HEK293 (cell line): ENCODE measurements at regions of chr17 and their contacts with region 1.

Region 1: DNA sequence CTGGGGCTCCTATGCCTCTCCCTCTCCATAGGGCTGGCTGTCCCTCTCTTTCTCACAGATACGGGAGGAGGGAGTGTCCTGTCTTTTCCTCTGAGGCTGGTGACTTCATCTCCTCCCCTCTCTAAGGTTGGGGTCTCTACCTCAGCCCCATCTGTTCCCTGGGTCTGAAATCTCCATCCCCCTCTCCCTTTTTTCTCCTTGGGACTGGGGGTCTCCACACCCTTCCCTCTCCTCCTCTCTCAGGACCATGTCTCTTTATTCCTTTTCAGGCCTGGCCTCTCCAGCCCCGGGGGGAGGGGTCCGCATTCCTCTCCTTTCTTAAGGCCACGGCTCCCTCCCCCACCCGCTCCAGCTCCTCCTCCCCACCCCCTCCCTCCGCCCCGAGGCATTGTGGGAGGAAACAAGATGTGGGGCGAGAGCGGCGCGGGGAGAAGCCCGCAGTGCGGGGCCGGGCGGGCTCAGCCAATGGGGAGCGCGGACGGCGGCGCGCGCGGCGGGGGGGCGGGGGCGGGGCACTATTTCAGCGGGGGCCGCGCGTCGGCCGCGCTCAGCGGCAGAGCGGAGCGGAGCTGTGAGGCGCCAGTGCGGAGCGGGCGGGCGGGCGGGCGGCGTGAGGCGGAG is at the start of gene DYNLL2:
- H3K4me3 ChIP-seq: peak within 1 kb of the TSS; percentile 91
- H3K27ac ChIP-seq: peak within 1 kb of the TSS; percentile 90
- H3K4me1 ChIP-seq: peaks cover 19% of the 10 kb centered on the region
- CTCF ChIP-seq: no peak

Region 2: DNA sequence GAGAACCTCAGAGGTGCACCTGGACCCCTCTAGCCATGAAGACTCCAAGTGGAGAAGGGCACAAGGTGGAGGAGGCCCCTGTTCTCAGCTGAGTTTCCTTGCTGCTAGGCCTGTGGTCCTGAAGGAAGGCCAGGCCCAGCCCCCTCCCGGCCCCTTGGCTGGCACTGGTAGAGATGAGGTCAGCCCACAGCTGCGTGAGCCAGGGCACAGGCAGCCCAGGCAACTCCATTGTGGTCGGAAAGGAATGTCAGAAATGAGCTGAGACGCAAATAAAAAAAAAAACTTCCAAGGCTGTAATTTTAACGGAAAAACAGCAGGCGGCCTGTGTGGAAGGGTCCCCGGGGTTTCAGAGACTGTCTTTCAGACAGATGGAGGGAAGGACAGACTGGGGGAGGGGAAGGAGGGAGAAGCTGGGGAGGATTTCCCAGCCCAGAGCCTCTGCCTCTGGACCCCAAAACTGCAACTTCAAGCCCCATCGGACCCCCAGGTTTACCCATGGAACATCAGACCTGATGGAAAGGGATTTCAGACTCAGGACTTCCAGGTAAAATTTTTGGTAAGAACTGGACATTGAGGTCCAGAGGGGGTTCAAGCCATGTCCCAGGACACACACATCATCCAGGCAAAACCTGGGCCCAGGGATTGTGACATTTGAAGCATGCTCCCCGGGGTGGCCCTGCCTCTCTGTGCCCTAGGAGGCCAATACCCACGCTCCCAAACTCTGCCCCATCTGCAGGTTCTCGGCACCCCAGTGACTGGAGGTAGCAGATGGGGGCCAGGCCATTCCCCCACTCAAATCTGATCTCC is 207.5 kb before region 1 on chr17:
- CTCF ChIA-PET with region 1: interaction called, 3 read pairs
- POLR2A ChIA-PET with region 1: interaction called, 13 read pairs
- H3K4me3 ChIP-seq: no peak overlapping the region
- H3K27ac ChIP-seq: peak overlapping the region; percentile 87
- H3K4me1 ChIP-seq: peaks cover 21% of the 10 kb centered on the region
- CTCF ChIP-seq: peak; percentile 65

Region 3: GRCh38 chr17:58072862-58073261 is 10.1 kb before region 1 on chr17:
- CTCF ChIA-PET with region 1: no interaction called
- POLR2A ChIA-PET with region 1: interaction called, 13 read pairs
- H3K4me3 ChIP-seq: no peak overlapping the region
- H3K27ac ChIP-seq: no peak overlapping the region
- H3K4me1 ChIP-seq: no peaks in the 10 kb centered on the region
- CTCF ChIP-seq: no peak

Region 4: GRCh38 chr17:58096892-58097291 is 13.9 kb after region 1 on chr17:
- CTCF ChIA-PET with region 1: interaction called, 4 read pairs
- POLR2A ChIA-PET with region 1: interaction called, 10 read pairs
- H3K4me3 ChIP-seq: no peak overlapping the region
- H3K27ac ChIP-seq: no peak overlapping the region
- H3K4me1 ChIP-seq: no peaks in the 10 kb centered on the region
- CTCF ChIP-seq: no peak